ENCODE measurements at regions of chrX and their contacts with region 1.

Region 1: GRCh38 chrX:34638116-34638515 is 19.0 kb downstream of the TMEM47 start:
- DNase-seq: no peak
- H3K4me3 ChIP-seq: no peak overlapping the region
- H3K27ac ChIP-seq: no peak overlapping the region
- H3K4me1 ChIP-seq: no peaks in the 10 kb centered on the region
- H3K27me3 ChIP-seq: no peaks in the 10 kb centered on the region
- CTCF ChIP-seq: peak in 1 of 3 donors; percentile 29
- POLR2A ChIP-seq: no peak

Region 2: GRCh38 chrX:33589316-33589715 is 1048.8 kb before region 1 on chrX:
- intact Hi-C with region 1: no loop called
- DNase-seq: no peak
- H3K4me3 ChIP-seq: no peak overlapping the region
- H3K27ac ChIP-seq: no peak overlapping the region
- H3K4me1 ChIP-seq: no peaks in the 10 kb centered on the region
- H3K27me3 ChIP-seq: no peaks in the 10 kb centered on the region
- CTCF ChIP-seq: no peak
- POLR2A ChIP-seq: no peak

Region 3: DNA sequence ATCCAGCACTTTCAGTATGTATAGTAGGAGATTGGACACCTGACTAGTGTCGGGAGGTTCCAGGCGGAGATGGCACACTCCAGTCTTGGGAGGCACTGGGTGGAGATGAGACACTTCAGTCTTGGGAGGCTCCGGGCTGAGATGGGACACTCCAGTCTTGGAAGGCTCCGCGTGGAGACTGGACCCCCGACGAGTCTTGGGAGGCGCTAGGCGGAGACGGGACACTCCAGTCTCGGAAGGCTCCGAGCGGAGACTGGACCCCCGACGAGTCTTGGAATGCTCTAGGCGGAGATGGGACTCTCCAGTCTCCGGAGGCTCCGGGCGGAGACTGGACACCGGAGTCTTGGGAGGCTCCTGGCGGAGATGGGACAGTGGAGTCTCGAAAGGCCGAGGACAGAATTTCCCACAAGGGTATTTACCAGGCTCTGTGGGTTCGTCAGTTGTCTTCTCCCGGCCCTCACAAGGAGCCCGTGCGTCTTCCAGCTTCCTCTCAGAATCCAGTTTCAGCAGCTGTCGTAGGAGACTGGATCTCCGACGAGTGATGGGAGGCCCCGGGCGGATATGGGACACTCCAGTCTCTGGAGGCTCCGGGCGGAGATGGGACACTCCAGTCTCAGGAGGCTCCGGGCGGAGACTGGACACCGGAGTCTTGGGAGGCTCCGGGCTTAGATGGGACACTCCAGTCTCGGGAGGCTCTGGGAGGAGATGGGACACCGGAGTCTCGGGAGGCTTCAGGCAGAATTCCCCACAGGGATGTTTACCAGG is 507.0 kb before region 1 on chrX:
- intact Hi-C with region 1: no loop called
- DNase-seq: no peak
- H3K4me3 ChIP-seq: no peak overlapping the region
- H3K27ac ChIP-seq: no peak overlapping the region
- H3K4me1 ChIP-seq: no peaks in the 10 kb centered on the region
- H3K27me3 ChIP-seq: peaks cover 0 to 4% of the 10 kb centered on the region in 2 donors
- CTCF ChIP-seq: no peak
- POLR2A ChIP-seq: no peak

Region 4: DNA sequence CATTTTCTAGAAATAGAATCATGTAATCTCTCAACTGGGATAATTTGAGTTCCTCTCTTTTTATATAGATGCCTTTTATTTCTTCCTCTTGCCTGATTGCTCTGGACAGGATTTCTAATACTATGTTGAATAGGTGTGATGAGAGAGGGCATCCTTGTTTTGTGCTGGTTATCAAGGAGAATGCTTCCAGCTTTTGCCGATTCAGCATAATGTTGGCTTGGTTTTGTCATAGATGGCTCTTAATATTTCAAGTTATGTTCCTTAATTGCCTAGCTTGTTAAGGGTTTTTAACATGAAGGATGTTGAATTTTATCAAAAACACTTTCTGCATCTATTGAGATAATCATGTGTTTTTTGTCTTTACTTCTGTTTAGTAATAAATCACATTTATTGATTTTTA is 39.8 kb before region 1 on chrX:
- intact Hi-C with region 1: no loop called
- DNase-seq: no peak
- H3K4me3 ChIP-seq: no peak overlapping the region
- H3K27ac ChIP-seq: no peak overlapping the region
- H3K4me1 ChIP-seq: no peaks in the 10 kb centered on the region
- H3K27me3 ChIP-seq: peaks cover 0 to 12% of the 10 kb centered on the region in 2 donors
- CTCF ChIP-seq: no peak
- POLR2A ChIP-seq: no peak

Region 5: GRCh38 chrX:35374116-35374515 is 736.0 kb after region 1 on chrX:
- intact Hi-C with region 1: loop called (anchors 10 kb)
- DNase-seq: no peak
- H3K4me3 ChIP-seq: no peak overlapping the region
- H3K27ac ChIP-seq: no peak overlapping the region
- H3K4me1 ChIP-seq: no peaks in the 10 kb centered on the region
- H3K27me3 ChIP-seq: peaks cover 0 to 13% of the 10 kb centered on the region in 2 donors
- CTCF ChIP-seq: no peak
- POLR2A ChIP-seq: no peak

Measured in breast epithelium (tissue), 4 donors.